PC-9 (cell line): ENCODE measurements at regions of chr1 and their contacts with region 1.

Region 1: DNA sequence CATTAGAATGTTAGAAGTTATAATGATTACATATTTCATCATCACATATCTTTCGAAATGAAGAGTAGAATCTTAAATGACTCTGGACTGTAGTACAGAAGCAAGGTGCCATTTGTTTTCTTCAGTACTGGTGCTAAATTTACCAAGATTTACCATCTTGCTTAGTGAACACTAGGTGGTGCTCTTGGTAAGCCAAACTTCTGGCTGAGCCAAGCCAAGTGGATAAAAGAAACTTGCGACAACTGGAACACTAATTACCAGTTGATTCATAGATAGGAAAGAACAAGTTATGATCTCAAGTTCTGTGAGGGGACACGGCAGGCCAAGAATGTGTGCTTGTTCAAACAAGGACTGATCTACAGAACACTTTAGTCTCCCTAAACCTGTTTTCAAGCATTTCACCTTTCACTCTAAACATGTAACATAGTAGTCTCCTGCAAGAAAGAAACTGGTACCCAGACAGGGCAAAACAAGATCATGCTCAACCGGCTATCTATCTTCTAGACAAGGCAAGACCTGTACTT is 19.8 kb downstream of the SPRTN start:
- DNase-seq: peak; percentile 14 to 71
- H3K4me3 ChIP-seq: no peak overlapping the region
- H3K27ac ChIP-seq: no peak overlapping the region
- H3K4me1 ChIP-seq: no peaks in the 10 kb centered on the region
- H3K27me3 ChIP-seq: no peaks in the 10 kb centered on the region
- CTCF ChIP-seq: peak; percentile 89

Region 2: DNA sequence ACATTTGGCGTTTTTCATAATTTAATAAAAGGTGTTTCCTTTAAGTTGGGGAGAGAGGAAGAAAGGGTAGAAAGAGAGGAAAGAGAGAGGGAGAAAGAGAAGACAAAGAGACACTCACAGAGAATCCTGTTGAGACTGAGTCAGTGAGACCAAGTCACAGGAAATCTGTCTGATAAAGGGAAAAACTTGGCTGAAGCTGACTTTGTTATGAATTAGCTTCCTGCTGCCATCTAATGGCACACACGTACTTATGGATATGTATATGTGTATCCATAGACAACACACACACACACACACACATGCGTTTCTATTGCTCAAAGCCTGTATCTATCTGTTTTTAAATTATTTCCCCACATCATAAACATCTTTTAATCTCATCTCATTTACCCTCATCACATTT is 226.2 kb after region 1 on chr1:
- CTCF ChIA-PET with region 1: interaction called, 11 read pairs
- POLR2A ChIA-PET with region 1: no interaction called
- intact Hi-C with region 1: loop called (anchors 1 kb)
- DNase-seq: no peak
- H3K4me3 ChIP-seq: no peak overlapping the region
- H3K27ac ChIP-seq: no peak overlapping the region
- H3K4me1 ChIP-seq: no peaks in the 10 kb centered on the region
- H3K27me3 ChIP-seq: no peaks in the 10 kb centered on the region
- CTCF ChIP-seq: no peak; the same call in 1 of the 2 replicates

Region 3: DNA sequence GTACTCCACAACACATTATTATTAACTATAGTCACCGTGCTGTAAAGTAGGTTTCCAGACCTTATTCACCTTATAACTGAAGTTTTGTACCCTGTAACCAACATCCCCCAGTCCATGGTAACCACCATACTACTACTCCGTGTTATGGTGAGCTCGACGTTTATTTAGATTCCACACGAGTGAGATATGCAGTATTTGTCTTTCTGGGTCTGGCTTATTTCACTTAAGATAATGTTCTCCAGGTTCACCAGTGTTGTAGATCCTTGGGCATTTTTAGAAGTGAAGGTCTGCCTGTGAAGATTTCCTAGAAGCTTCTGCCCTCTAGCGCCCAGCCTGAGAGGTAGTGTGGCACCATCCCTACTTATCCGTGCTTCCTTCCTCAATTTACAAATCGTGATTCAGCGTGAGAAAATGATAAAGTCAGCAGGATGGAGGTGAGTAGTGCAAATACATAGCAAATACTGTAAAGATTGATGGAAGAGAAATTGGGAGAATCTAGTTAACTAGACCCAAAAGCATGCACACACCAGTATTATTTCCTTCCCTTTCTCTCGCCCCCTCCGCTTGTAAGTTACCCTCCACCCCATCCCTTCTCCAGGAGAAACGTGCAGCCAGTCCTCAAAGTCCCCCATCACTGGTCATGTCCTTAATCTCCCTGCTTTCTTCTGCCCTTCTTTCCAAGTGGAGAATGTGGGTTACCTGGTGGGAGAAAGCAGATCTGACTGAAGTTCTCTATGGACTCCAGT is 232.7 kb after region 1 on chr1:
- CTCF ChIA-PET with region 1: interaction called, 3 read pairs
- POLR2A ChIA-PET with region 1: no interaction called
- intact Hi-C with region 1: loop called (anchors 1 kb)
- DNase-seq: peak; percentile 34 to 56
- H3K4me3 ChIP-seq: no peak overlapping the region
- H3K27ac ChIP-seq: no peak overlapping the region
- H3K4me1 ChIP-seq: no peaks in the 10 kb centered on the region
- H3K27me3 ChIP-seq: no peaks in the 10 kb centered on the region
- CTCF ChIP-seq: peak; percentile 82